ENCODE measurements at regions of chr7 and their contacts with region 1.

Region 1: GRCh38 chr7:101195884-101196283 is 5.0 kb downstream of the MOGAT3 start:
- DNase-seq: no peak
- H3K4me3 ChIP-seq: no peak overlapping the region
- CTCF ChIP-seq: no peak

Region 2: GRCh38 chr7:101173752-101174244 is 22.1 kb before region 1 on chr7:
- CTCF ChIA-PET with region 1: interaction called, 76 read pairs
- POLR2A ChIA-PET with region 1: no interaction called
- DNase-seq: no peak
- H3K4me3 ChIP-seq: peak overlapping the region; percentile 42
- CTCF ChIP-seq: no peak

Region 3: DNA sequence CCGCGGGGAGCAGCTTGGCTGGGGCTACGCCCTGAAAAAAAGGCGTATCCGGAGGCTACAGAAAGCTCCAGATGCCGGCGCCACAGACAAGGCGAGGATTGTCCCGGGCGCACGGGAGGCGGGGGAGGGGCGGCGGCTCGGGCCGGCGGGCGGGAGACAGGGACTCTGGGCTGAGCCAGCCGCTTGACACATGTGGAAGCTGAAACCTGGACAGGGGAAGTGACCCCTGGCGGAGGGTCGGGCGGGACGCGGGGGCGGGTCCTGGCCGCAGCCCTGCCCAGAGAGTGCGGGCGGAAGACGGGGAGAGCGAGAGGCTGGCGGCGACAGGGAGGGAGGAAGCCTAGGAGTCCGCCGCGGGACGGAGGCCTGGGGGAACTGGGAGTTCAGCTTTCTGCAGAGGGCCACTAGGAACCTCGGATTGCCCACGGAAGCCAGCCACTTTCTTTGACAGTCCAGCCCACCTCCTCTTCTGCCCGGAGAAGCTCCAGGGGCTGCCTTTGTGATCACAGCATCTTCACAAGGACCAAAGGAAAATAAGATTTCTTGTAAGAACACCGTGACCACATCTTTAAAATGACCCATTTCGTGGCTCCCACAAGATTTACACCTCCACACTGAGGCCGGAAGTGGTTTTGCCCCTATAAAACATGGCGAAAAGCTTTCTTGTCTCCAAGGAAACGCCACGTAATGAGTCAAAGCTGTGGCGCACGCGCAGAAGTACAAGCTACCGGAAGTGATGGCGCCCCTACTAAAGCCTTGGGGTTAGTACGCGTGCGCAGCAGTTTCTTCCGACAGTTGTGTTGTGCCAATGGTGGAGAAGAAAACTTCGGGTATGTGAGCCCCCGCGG is 21.7 kb after region 1 on chr7 and contains the starts of genes PLOD3 and ZNHIT1:
- CTCF ChIA-PET with region 1: interaction called, 105 read pairs
- POLR2A ChIA-PET with region 1: no interaction called
- DNase-seq: peak; percentile 85
- H3K4me3 ChIP-seq: peak within 1 kb of the TSS; percentile 91
- CTCF ChIP-seq: peak; percentile 13

Measured in AG04449 (cell line).